Motor neuron (in vitro differentiated cells): ENCODE measurements at regions of chr2 and their contacts with region 1.

Region 1: GRCh38 chr2:36812196-36812595 is 115.7 kb downstream of the VIT start:
- ATAC-seq: peak in 3 of 8 experiments; percentile 37 to 62 (median 49)
- H3K4me3 ChIP-seq: no peak overlapping the region
- H3K27ac ChIP-seq: no peak overlapping the region
- H3K4me1 ChIP-seq: no peaks in the 10 kb centered on the region

Region 2: GRCh38 chr2:36530983-36531354 is 281.2 kb before region 1 on chr2:
- in situ Hi-C with region 1: no loop called
- ATAC-seq: peak in 1 of 8 experiments; percentile 62
- H3K4me3 ChIP-seq: no peak overlapping the region
- H3K27ac ChIP-seq: no peak overlapping the region
- H3K4me1 ChIP-seq: no peaks in the 10 kb centered on the region

Region 3: DNA sequence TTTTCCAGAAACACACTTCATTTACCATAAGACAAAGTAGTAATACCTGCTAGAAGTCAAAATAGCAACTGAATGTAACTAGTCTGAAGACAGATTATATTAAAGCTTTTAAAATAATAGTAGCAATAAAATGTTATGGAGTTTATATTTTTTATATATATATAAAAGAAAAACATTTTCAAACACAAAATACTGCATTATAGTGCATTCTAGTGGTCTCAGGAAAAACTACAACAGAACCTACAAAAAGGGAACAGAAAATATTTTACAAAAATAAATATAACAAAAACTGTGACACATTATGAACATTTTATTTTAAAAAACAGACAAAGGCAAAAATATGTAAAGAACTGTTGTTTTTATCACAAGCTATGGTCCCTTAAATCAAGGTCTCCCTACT is 106.1 kb after region 1 on chr2:
- in situ Hi-C with region 1: loop called in 1 of 9 experiments (anchors 25 kb)
- ATAC-seq: no peak
- H3K4me3 ChIP-seq: no peak overlapping the region
- H3K27ac ChIP-seq: no peak overlapping the region
- H3K4me1 ChIP-seq: no peaks in the 10 kb centered on the region